Activated CD8-positive, alpha-beta memory T cell treated with anti-CD3 and anti-CD28 coated beads, Interleukin-2, amount 10 ng/mL, durations not matched to agents 7 days and 5 days (primary cell): ENCODE measurements at regions of chr2 and their contacts with region 1.

Region 1: DNA sequence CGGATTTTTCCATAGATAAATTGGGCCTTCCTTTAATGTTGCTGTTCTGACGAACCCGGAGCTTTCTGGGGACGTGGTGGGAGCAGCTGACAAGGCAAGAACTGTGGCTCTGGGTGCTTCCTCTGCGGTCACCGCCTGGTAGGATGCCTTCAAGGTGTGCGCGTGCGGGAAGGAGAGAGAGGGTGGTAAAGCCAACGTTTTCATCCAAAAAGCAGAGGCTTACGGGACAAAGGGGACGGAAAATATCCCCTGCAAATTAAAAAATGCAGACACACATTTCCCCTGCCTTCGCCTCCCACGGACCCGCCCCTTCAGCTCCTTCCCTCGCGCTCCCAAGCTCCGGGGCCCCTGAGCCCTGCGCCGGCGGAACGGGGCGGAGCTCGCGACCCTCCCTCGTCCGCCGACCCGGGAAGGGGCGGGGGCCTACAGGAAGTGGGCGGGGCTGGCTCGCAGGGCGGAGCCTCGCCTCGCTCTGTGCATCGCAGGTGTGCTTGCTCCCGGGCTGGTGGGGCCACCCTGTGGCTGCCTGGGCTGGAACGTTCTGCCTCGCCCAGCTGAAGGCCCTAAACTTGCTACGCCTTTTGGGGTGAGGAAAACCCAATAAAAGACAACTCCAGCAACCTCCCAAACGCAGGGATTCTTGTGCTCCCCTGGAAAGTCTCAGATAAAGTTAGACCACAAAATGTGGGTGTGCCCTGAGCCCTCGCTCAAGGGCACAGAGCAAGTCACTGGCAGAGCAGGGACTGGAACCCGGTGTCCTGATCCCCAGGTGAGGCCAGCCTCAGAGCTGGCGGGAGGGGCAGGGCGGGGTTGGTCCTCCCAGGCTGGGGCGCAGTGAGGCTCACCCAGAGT is 25.4 kb upstream of the SLC66A3 start:
- DNase-seq: peak; percentile 77
- ATAC-seq: peak; percentile 83
- H3K4me3 Mint-ChIP-seq: peak overlapping the region; percentile 50
- H3K27ac Mint-ChIP-seq: no peak overlapping the region
- H3K4me1 Mint-ChIP-seq: peaks cover 25% of the 10 kb centered on the region
- H3K27me3 Mint-ChIP-seq: peaks cover 17% of the 10 kb centered on the region

Region 2: GRCh38 chr2:11144077-11144737 is 14.4 kb after region 1 on chr2:
- CTCF ChIA-PET with region 1: interaction called, 11 read pairs
- DNase-seq: no peak
- ATAC-seq: no peak
- H3K4me3 Mint-ChIP-seq: no peak overlapping the region
- H3K27ac Mint-ChIP-seq: no peak overlapping the region
- H3K4me1 Mint-ChIP-seq: no peaks in the 10 kb centered on the region
- H3K27me3 Mint-ChIP-seq: peaks cover 26% of the 10 kb centered on the region

Region 3: GRCh38 chr2:11160731-11161455 is 31.1 kb after region 1 on chr2:
- CTCF ChIA-PET with region 1: interaction called, 35 read pairs
- DNase-seq: no peak
- ATAC-seq: peak; percentile 84
- H3K4me3 Mint-ChIP-seq: peak overlapping the region; percentile 54
- H3K27ac Mint-ChIP-seq: peak overlapping the region; percentile 89
- H3K4me1 Mint-ChIP-seq: peaks cover 16% of the 10 kb centered on the region
- H3K27me3 Mint-ChIP-seq: no peaks in the 10 kb centered on the region

Region 4: GRCh38 chr2:11417946-11418585 is 288.2 kb after region 1 on chr2:
- CTCF ChIA-PET with region 1: interaction called, 37 read pairs
- DNase-seq: no peak
- ATAC-seq: no peak
- H3K4me3 Mint-ChIP-seq: no peak overlapping the region
- H3K27ac Mint-ChIP-seq: no peak overlapping the region
- H3K4me1 Mint-ChIP-seq: no peaks in the 10 kb centered on the region
- H3K27me3 Mint-ChIP-seq: peaks cover 12% of the 10 kb centered on the region

Region 5: GRCh38 chr2:11430729-11431128 is 300.9 kb after region 1 on chr2:
- CTCF ChIA-PET with region 1: no interaction called
- DNase-seq: no peak
- ATAC-seq: no peak
- H3K4me3 Mint-ChIP-seq: no peak overlapping the region
- H3K27ac Mint-ChIP-seq: no peak overlapping the region
- H3K4me1 Mint-ChIP-seq: no peaks in the 10 kb centered on the region
- H3K27me3 Mint-ChIP-seq: no peaks in the 10 kb centered on the region

Region 6: DNA sequence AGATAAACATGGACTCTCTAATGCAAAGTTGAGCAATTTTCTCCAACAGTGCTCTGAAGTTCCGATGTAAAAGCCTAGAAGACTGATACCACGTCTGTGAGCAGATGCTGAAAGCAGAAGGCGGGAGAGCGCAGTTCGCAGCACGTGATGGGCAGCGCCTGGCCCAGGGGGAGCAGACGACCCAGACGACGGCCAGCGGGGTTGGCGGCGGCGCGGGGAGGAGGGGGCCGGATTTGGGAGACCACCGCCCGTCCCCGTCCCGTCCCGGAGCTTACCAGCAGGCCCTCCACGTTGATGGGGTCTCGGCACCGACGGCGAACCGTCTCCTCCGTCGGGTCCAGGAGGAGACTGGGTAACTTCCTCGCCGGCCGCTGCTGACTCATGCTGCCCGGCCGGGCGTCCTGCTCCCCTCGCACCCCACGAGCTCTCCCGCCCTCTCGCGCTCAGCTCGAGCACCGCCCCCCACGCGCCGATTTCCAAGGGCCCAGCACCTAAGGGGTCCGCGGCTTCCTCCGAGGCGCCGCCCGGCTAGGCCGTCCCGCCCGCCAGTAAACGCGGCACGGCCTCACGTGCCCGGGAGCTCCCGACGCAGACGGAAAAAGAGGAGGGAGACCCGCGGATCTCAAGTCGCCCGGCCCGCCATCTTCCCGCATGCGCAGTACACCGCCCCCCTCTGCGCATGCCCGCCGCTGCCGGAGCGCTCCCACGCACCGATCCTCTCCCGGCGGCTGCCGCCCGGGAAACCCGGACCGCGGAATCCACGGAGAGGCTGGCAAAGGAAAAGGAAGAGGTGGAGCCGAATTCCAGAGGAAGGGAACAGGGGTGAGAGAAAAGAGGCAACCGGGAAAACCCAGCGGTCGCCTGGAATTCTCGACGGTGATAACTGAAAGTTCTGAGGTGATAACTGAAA is 335.9 kb after region 1 on chr2 and contains the start of gene E2F6:
- CTCF ChIA-PET with region 1: interaction called, 33 read pairs
- DNase-seq: peak; percentile 85
- ATAC-seq: peak; percentile 93
- H3K4me3 Mint-ChIP-seq: peak within 1 kb of the TSS; percentile 93
- H3K27ac Mint-ChIP-seq: peak within 1 kb of the TSS; percentile 82
- H3K4me1 Mint-ChIP-seq: peaks cover 27% of the 10 kb centered on the region
- H3K27me3 Mint-ChIP-seq: no peaks in the 10 kb centered on the region
- total RNA-seq, gene E2F6: 7.5 to 11.8 TPM

Region 7: DNA sequence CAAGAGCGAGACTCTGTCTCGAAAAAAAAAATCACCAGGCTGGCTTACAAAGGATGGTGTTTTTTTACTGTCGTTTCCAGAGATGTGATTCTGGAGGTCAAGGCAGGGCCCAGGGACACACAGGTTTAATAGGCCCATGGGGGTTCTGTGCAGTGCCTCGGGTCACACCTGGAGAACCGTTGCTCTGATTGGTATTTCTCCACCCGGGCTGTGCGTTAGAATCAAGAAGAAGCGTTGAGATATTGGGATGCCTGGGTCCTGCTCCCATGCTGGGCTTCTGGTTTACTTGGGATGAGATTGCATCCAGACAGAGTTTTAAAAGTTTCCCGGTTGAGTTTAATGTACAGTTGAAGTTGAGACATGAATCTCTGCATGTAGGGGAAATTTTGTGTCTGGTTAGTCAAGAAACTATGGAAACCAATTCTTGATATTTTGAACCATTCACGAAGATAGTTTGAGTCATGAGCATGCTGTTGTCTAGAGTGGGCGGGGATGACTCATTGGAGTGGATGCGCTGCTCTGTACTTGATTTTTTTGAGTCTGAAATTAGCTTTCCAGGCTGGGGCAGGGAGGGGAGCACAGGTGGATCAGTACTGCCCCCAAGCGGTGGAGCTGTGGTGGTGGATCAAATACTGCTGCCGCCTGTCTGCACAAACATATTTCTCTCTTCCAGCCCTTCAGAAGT is 454.2 kb after region 1 on chr2:
- CTCF ChIA-PET with region 1: interaction called, 118 read pairs
- DNase-seq: peak; percentile 82
- ATAC-seq: peak; percentile 89
- H3K4me3 Mint-ChIP-seq: no peak overlapping the region
- H3K27ac Mint-ChIP-seq: no peak overlapping the region
- H3K4me1 Mint-ChIP-seq: peaks cover 7% of the 10 kb centered on the region
- H3K27me3 Mint-ChIP-seq: peaks cover 6% of the 10 kb centered on the region